Caki2 (cell line): ENCODE measurements at regions of chr6 and their contacts with region 1.

Region 1: DNA sequence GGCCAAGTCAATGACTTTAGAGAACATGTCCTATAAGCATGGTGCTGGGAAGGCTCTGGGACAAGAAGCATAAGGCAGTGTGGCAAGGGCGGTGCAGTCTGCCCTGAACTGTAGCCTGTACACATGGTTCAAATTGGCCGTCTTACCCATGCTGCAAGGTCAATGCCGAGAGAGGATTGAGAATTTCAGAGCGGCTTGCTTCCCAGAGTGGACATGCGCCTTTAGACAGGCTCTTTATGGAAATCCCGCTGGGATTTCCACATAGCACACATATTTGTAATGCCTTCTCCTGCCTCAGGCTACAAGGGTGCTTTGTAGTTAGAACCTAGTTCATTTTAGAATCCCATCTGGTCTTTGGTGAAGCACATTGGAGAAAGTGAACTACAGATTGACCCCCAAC is 36.1 kb upstream of the CEP162 start:
- DNase-seq: no peak

Region 2: GRCh38 chr6:84150705-84151104 is 112.9 kb before region 1 on chr6:
- in situ Hi-C with region 1: no loop called
- DNase-seq: no peak

Region 3: GRCh38 chr6:85273870-85274269 is 1010.3 kb after region 1 on chr6:
- in situ Hi-C with region 1: loop called (anchors 10 kb)
- DNase-seq: no peak